PC-3 (cell line): ENCODE measurements at regions of chr1 and their contacts with region 1.

Region 1: DNA sequence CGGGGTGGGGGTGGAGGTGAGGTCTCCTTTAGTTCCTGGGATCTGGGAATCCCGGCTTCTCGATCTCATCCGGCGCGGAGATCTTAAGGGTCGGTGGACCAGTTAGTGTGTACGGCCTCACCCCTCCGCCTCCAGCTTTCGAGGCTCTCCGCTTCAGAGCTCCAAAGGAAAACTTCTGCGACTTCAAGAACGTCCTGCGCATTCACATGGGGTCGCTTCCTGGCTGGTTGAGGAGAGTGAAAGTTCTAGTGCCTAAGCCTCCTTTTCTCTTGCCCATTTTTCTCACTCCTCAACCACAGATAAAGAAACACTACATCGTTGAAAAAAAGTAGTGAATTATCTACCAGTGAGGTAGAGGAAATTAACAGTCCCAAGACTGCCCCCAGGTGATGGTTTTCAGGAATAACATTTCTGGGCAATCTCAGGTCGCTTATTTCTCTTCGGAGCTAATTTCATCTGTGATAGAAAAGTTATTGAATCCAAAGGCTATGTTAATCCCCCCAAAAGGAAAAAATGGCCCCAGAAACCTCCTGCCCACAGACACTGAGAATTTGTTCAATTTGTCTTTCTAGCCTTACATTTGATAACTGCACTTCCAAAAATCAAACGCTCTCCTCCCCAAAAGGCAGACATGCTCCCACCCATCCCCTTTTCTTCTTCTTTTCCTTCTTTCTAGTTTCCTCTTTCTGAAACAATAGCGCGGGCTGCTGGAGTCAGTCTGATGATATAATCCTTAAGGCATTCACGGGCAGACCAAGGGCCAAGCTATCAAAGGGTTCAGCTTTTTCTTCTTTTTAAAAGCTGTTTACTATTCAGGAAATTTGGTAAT is 20.6 kb upstream of the TBX15 start:
- DNase-seq: peak; percentile 73
- ATAC-seq: peak; percentile 57
- H3K4me3 ChIP-seq: no peak overlapping the region
- H3K27ac ChIP-seq: no peak overlapping the region
- H3K4me1 ChIP-seq: 0 out of 2 replicates have a peak, but pooled peaks cover 7% of the 10 kb centered on the region
- H3K27me3 ChIP-seq: no peaks in the 10 kb centered on the region
- CTCF ChIP-seq: peak; percentile 83

Region 2: DNA sequence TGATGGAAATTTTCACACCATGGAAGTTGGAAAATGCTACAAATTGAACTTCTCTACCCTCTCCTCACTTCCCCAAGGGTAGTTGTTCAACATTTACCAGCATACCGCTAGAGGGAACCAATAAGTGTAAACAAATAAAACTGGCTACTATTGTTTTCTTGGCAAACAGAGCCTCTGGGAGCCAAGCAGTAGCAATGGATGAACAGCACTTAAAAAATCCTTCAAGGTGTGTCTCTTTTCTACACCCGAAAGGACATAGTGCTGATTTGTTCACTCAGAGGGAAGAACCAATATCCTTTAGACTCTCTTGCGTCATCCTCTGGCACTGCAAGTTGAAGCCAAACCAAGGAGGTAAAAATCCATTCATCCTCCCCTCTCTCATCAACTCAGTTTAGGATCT is 182.0 kb before region 1 on chr1:
- CTCF ChIA-PET with region 1: interaction called, 3 read pairs
- POLR2A ChIA-PET with region 1: no interaction called
- intact Hi-C with region 1: loop called (anchors 5 kb)
- DNase-seq: peak; percentile 68
- ATAC-seq: no peak
- H3K4me3 ChIP-seq: no peak overlapping the region
- H3K27ac ChIP-seq: no peak overlapping the region
- H3K4me1 ChIP-seq: no peaks in the 10 kb centered on the region
- H3K27me3 ChIP-seq: no peaks in the 10 kb centered on the region
- CTCF ChIP-seq: peak; percentile 56

Region 3: DNA sequence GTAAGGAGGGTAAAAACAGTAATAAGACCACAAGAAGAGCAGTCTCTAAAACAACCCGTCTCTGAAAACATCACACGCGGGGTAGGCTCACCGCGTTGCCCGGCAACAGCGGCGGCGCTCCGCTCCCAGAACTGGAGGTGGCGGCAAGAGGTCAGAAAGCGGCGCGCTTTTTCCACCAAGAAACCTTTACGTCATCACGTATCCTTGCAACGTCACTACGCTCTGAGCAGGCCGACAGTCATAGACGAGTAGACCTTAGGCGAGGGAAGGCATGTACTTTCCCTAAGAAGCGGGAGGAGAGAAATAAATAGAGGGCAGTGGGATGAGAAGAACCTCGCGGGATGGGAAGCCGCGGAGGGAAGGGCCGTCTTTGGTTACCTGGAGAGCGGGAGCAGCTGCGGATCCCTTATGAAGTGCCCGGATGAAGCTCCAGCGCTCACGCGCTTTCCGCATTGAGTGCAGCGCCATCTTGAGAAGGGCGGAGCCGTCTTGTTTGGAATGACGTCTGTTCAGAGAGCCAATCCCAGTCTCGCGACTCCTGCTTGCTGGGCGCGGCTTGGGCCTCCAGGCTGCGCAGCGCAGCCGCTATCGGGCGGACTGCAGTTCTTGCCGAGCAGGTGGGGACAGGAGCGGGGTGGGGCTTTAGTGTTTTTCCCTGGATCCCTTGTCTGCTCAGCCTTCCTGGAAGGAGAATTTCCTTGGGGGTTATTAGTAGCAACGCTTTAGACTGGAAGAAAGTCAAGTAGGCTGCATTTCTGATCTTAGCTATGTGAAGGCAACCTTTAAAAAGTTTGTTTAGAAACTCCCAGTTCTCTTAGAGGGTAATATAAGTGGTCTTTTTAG is 131.7 kb after region 1 on chr1 and contains the start of gene WARS2:
- CTCF ChIA-PET with region 1: no interaction called
- POLR2A ChIA-PET with region 1: no interaction called
- intact Hi-C with region 1: loop called (anchors 10 kb)
- DNase-seq: peak; percentile 97
- ATAC-seq: peak; percentile 97
- H3K4me3 ChIP-seq: peak within 1 kb of the TSS; percentile 74
- H3K27ac ChIP-seq: peak within 1 kb of the TSS; percentile 93
- H3K4me1 ChIP-seq: peaks cover 32% of the 10 kb centered on the region
- H3K27me3 ChIP-seq: no peaks in the 10 kb centered on the region
- CTCF ChIP-seq: no peak
- total RNA-seq, gene WARS2: 16.8 and 18.1 TPM in 2 replicates

Region 4: GRCh38 chr1:119367427-119368124 is 358.9 kb after region 1 on chr1:
- CTCF ChIA-PET with region 1: no interaction called
- POLR2A ChIA-PET with region 1: no interaction called
- intact Hi-C with region 1: loop called (anchors 10 kb)
- DNase-seq: peak; percentile 74
- ATAC-seq: peak; percentile 62
- H3K4me3 ChIP-seq: no peak overlapping the region
- H3K27ac ChIP-seq: no peak overlapping the region
- H3K4me1 ChIP-seq: peaks cover 8% of the 10 kb centered on the region; the same call in 1 of the 2 replicates
- H3K27me3 ChIP-seq: peaks cover 15% of the 10 kb centered on the region
- CTCF ChIP-seq: peak; percentile 97